ENCODE measurements at regions of chr11 and their contacts with region 1.

Region 1: DNA sequence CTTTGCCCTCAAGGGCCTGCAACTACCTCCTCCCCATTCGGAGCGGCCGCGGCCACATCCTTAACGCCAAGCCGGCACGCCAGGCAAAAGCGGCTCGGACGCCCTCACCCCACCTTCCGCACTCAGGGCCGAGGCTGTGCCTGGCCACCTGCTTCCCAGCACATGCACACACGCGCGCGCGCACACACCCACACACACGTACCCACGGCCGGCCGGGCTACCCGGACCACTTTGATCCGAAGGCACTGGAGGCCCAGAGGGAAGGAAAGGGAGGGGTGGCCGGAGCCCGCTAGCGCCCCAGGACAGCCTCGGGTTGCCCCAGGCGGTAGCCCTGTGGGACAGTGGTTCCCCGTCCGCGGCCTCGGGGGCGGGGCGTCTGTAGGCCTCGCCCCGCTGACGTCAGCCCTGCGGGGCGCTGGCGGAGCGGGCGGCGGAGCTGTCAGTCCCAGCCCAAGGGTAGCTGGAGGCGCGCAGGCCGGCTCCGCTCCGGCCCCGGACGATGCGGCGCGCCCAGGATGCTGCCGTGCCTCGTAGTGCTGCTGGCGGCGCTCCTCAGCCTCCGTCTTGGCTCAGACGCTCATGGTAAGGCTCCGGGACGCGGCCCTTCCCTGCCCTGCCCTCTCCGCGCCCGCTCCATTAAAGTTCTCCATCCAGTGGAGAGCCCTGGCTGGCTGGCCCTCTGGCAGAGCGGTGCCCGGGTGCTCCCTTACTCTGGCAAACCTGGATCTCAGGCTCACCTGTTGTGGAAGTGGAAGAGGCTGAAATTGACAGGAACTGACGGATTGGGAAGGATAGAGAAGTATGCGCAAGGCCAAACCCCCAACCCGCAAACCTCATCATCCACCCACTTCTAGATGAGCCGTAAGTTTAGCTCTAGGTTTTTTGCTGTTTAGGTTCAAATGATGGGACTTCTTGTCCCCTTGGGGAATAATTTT is at the start of gene IL10RA:
- DNase-seq: peak; percentile 81
- H3K4me3 Mint-ChIP-seq: peak within 1 kb of the TSS; percentile 84
- H3K27ac Mint-ChIP-seq: peak within 1 kb of the TSS; percentile 88
- H3K4me1 Mint-ChIP-seq: peaks cover 63% of the 10 kb centered on the region
- H3K27me3 Mint-ChIP-seq: no peaks in the 10 kb centered on the region
- total RNA-seq, gene IL10RA: 11.3 to 16.1 TPM

Region 2: GRCh38 chr11:117456027-117456720 is 530.0 kb before region 1 on chr11:
- CTCF ChIA-PET with region 1: no interaction called
- intact Hi-C with region 1: loop called (anchors 1 kb)
- DNase-seq: peak; percentile 49
- H3K4me3 Mint-ChIP-seq: no peak overlapping the region
- H3K27ac Mint-ChIP-seq: peak overlapping the region; percentile 11
- H3K4me1 Mint-ChIP-seq: no peaks in the 10 kb centered on the region
- H3K27me3 Mint-ChIP-seq: no peaks in the 10 kb centered on the region

Region 3: DNA sequence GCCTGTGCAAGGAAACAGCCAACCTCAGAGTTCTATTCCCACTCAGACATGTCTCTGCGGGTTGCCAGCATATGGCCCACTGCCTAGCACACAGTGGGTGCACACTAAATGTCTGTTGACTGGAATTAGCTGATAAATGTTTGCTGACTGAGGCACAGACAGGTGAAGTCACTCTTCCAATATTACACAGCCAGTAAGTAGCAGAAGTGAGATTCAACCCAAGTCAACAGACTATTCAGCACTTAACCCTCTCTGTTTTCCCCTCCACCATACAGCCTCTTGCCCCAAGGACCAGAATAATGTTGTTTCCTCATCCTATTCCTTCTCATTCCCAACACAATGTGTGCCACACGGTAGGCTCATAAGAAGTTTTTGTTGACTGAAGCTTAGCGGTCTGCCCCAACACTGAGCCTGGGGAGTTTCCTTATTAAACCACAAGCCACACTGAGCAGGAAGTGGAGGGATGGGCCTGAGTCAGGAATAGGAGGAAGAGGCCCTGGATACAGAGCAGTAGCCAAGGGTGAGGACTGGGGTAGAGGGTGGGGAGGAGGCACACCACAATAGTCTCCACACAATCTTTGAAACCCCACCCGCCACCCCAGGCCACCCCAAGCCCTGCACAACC is 15.7 kb before region 1 on chr11:
- CTCF ChIA-PET with region 1: interaction called, 3 read pairs
- intact Hi-C with region 1: loop called (anchors 1 kb)
- DNase-seq: peak; percentile 71
- H3K4me3 Mint-ChIP-seq: peak overlapping the region; percentile 2
- H3K27ac Mint-ChIP-seq: peak overlapping the region; percentile 48
- H3K4me1 Mint-ChIP-seq: peaks cover 56% of the 10 kb centered on the region
- H3K27me3 Mint-ChIP-seq: no peaks in the 10 kb centered on the region

Region 4: DNA sequence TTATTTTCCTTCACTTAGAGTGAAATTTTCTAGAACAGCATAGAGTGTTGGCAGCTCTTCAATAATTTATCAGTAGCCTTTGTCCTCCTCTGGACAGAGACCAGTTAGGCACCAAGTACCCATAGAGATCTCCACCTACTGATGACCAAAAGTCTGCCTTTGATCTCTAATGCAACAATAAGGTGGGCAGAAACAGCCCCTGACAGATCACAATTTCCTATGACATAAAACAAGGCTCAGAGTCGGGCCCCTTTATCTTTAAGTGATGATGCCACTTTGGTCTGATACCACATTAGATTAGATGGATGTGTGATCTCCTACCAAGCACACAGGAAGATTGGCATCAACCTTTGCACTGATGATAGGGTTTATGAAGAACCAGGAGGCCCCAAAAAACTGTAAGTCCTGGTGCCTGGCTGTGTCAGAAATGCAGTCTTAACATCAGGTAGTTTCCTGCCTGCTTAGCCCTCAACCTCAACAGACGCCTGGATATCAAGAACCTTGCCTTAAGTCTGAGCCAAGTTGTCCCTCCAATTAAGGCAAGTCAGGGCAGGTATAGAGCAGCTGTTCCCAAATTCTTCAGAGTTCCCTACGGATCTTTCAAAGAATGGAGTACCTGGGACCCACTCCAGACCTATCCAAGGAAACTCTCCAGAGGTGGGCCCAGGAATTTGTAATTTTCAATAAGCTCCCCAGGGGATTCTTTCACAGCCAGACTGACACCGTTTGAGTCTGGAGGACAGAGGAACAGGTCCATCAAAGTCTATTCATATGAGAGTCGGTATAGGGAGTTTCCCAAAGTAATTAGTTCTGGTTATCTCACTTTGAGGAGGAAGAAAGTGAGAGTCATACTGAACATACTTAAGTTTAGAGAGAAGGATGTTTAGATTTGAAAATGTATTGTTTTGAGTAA is 60.1 kb after region 1 on chr11:
- CTCF ChIA-PET with region 1: interaction called, 4 read pairs
- intact Hi-C with region 1: loop called (anchors 1 kb)
- DNase-seq: peak; percentile 52
- H3K4me3 Mint-ChIP-seq: no peak overlapping the region
- H3K27ac Mint-ChIP-seq: peak overlapping the region; percentile 63
- H3K4me1 Mint-ChIP-seq: peaks cover 78% of the 10 kb centered on the region
- H3K27me3 Mint-ChIP-seq: no peaks in the 10 kb centered on the region

Region 5: GRCh38 chr11:118060011-118060661 is 73.9 kb after region 1 on chr11:
- CTCF ChIA-PET with region 1: no interaction called
- intact Hi-C with region 1: no loop called
- DNase-seq: no peak
- H3K4me3 Mint-ChIP-seq: no peak overlapping the region
- H3K27ac Mint-ChIP-seq: no peak overlapping the region
- H3K4me1 Mint-ChIP-seq: no peaks in the 10 kb centered on the region
- H3K27me3 Mint-ChIP-seq: no peaks in the 10 kb centered on the region

Region 6: GRCh38 chr11:118448294-118448693 is 462.1 kb after region 1 on chr11:
- CTCF ChIA-PET with region 1: no interaction called
- intact Hi-C with region 1: loop called (anchors 5 kb)
- DNase-seq: peak; percentile 24
- H3K4me3 Mint-ChIP-seq: no peak overlapping the region
- H3K27ac Mint-ChIP-seq: no peak overlapping the region
- H3K4me1 Mint-ChIP-seq: peaks cover 72% of the 10 kb centered on the region
- H3K27me3 Mint-ChIP-seq: no peaks in the 10 kb centered on the region

Measured in activated naive CD4-positive, alpha-beta T cell treated with anti-CD3 and anti-CD28 coated beads for 36 hours (primary cell).